CD8-positive, alpha-beta T cell (primary cell): ENCODE measurements at regions of chrX and their contacts with region 1.

Region 1: DNA sequence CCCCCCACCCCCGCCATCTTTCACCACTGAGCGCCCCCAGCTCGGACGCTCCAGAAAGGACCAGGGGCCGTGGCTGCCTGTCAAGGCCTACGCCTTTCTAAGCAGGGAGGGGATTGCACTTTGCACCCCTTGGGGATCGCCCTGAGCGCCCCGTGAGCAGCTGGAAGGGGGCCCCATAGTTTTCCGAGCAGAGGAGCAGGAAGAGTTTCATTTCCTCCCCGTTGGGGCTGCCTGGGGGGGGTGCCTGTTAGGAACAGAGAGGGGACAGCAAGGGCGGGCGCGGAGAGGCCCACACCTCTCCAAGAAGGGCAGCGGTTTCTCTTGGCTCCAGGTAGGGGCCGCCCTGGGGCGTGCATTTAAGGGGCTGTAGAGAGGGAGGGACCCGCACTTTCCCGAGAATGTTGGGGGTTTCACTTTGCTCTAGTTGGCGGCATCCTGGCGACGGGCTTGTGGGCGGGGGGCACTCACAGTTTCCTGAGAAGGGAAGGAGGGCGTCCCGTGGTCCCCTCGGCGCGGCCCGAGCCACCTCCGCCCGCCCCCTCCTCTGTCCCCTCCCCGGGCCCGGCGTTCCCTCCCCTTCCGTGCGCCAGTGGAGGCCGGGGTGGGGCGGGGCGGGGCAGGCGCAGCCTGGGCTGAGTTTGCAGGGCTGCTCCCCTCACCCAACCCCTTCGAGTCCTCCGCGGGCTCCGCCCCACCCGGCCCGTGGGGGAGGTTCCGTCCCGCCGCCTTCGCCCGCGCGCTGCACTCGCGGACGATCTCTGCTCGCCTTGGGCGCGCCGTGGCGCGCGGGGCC is 82.3 kb upstream of the CD99 start:
- DNase-seq: peak; percentile 66 to 92 (median 85)
- ATAC-seq: peak; percentile 95
- H3K4me3 ChIP-seq: peak overlapping the region; percentile 88 to 93
- H3K4me3 Mint-ChIP-seq: peak overlapping the region; percentile 93
- H3K27ac ChIP-seq: peak overlapping the region; percentile 54 to 59
- H3K27ac Mint-ChIP-seq: peak overlapping the region; percentile 83
- H3K4me1 ChIP-seq: peaks cover 18% of the 10 kb centered on the region
- H3K4me1 Mint-ChIP-seq: peaks cover 46% of the 10 kb centered on the region
- H3K27me3 ChIP-seq: no peaks in the 10 kb centered on the region
- H3K27me3 Mint-ChIP-seq: no peaks in the 10 kb centered on the region
- CTCF ChIP-seq: no peak

Region 2: DNA sequence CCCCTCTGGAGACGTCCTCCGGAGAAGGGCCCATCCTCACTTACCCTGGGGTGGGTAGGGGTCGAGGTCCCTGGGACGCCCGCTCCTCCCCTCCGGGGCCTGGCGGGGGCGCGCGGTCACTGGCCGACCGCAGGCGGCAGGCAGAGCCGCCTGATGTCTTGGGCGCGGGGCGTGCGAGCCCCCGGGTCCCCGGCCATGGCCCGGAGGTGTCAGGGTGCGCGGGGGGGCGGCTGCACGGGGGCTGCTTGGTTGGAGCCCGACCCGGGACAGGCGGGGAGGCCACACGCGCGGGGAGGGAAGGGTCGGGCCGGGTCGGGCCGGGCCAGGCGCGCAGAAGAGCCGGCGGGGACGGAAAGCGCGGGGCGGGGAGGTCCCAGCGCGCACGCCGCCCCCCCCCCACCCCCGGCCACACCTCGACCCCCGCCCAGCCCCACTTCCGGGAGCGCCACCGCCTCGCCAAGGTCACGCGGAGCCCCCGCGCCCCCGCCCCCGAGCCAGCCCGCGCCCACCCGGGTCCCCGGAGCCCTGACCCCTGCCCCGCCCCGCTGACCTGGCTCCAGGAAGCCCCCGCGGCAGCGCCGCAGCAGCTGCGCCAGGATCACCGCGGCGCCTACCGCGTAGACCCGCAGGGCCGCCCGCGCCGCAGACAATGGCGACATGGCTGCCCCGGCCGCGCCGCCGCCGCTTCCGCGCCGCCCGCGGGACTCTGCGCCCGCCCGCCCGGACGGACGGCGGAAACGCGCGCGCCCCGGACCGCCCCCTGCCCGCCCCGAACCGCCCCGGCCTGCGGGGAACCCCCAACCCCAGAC is 108.4 kb before region 1 on chrX and contains the starts of genes DHRSX and ZBED1:
- CTCF ChIA-PET with region 1: no interaction called
- POLR2A ChIA-PET with region 1: no interaction called
- intact Hi-C with region 1: loop called in 1 of 2 experiments (anchors 2 kb)
- DNase-seq: peak in 8 of 9 experiments; percentile 29 to 72 (median 48)
- ATAC-seq: peak; percentile 64
- H3K4me3 ChIP-seq: peak within 1 kb of the TSS; percentile 66 to 67
- H3K4me3 Mint-ChIP-seq: peak within 1 kb of the TSS; percentile 88
- H3K27ac ChIP-seq: peak within 1 kb of the TSS; percentile 68 to 76
- H3K27ac Mint-ChIP-seq: peak within 1 kb of the TSS; percentile 93
- H3K4me1 ChIP-seq: peaks cover 12% of the 10 kb centered on the region
- H3K4me1 Mint-ChIP-seq: peaks cover 35% of the 10 kb centered on the region
- H3K27me3 ChIP-seq: no peaks in the 10 kb centered on the region
- H3K27me3 Mint-ChIP-seq: no peaks in the 10 kb centered on the region
- CTCF ChIP-seq: no peak
- total RNA-seq, gene DHRSX: 9.9 to 10.8 TPM
- total RNA-seq, gene ZBED1: 13.4 to 14.8 TPM

Region 3: DNA sequence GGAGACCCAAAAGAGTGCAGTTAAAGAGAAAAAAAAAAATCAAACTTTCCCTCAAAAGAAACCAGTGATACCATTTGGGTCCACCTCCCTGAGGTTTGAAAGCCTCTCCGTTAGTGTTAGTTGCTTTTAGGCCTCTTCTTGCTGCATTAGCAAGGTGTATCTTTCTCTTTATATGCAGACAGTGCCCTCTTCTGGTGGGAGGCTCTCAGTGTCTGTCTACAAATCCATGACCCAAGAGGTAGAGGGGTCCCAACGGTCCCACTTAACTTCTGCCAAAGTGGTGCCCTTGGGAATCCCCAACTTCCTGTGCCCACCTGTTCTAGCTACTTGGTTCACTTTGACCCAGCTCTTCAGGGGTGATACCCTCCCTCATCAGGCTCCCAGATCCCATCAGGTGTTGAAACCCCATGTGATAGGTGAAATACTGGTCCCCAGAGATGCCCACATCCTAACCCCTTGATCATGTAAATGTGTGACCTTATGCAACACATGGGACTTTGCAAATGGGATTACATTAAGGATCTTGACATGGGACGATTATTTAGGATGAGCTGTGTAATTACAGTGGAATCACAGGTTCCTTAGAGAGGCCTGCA is 18.5 kb after region 1 on chrX:
- CTCF ChIA-PET with region 1: no interaction called
- POLR2A ChIA-PET with region 1: no interaction called
- intact Hi-C with region 1: loop called (anchors 1 to 2 kb)
- DNase-seq: peak in 6 of 9 experiments; percentile 39 to 69 (median 50)
- ATAC-seq: peak; percentile 33
- H3K4me3 ChIP-seq: no peak overlapping the region
- H3K4me3 Mint-ChIP-seq: no peak overlapping the region
- H3K27ac ChIP-seq: no peak overlapping the region
- H3K27ac Mint-ChIP-seq: peak overlapping the region; percentile 58
- H3K4me1 ChIP-seq: peaks cover 16% of the 10 kb centered on the region
- H3K4me1 Mint-ChIP-seq: peaks cover 48% of the 10 kb centered on the region
- H3K27me3 ChIP-seq: no peaks in the 10 kb centered on the region
- H3K27me3 Mint-ChIP-seq: no peaks in the 10 kb centered on the region
- CTCF ChIP-seq: peak; percentile 43